Activated CD8-positive, alpha-beta memory T cell treated with anti-CD3 and anti-CD28 coated beads, Interleukin-2, amount 10 ng/mL, durations not matched to agents 7 days and 5 days (primary cell): ENCODE measurements at regions of chr15 and their contacts with region 1.

Region 1: GRCh38 chr15:99704444-99704838 is 28.8 kb downstream of the LYSMD4 start:
- DNase-seq: no peak
- ATAC-seq: peak; percentile 72
- H3K4me3 Mint-ChIP-seq: no peak overlapping the region
- H3K27ac Mint-ChIP-seq: no peak overlapping the region
- H3K4me1 Mint-ChIP-seq: peaks cover 38% of the 10 kb centered on the region
- H3K27me3 Mint-ChIP-seq: no peaks in the 10 kb centered on the region

Region 2: DNA sequence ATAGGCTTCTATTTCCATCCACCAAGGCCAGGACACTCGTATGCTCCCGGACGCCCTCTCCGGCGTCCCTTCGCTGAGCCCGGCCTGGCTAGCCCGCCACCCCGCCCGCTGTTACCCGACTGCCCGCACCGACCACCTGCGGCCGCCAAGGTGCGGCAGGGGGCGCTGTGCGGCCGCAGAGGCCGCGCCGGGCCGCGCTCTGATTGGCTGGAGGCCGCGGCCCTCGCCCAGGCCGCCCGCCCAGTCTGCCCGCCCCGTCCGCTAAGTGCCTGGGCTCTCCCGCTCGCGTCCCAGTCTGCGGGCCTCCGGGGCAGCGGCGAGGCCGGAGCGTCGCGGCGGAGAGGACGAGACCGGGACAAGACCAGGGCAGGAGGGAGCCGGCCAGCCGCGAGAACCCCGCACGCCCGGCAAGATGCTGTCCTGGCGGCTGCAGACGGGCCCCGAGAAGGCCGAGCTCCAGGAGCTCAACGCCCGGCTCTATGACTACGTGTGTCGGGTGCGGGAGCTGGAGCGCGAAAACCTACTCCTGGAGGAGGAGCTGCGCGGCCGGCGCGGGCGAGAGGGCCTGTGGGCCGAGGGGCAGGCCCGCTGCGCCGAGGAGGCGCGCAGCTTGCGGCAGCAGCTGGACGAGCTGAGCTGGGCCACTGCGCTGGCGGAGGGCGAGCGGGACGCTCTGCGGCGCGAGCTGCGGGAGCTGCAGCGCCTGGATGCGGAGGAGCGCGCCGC is 599.5 kb before region 1 on chr15 and contains the start of gene SYNM:
- CTCF ChIA-PET with region 1: interaction called, 11 read pairs
- DNase-seq: peak; percentile 46
- ATAC-seq: peak; percentile 52
- H3K4me3 Mint-ChIP-seq: peak within 1 kb of the TSS; percentile 60
- H3K27ac Mint-ChIP-seq: peak within 1 kb of the TSS; percentile 15
- H3K4me1 Mint-ChIP-seq: peaks cover 38% of the 10 kb centered on the region
- H3K27me3 Mint-ChIP-seq: peaks cover 58% of the 10 kb centered on the region
- total RNA-seq, gene SYNM: 1.5 TPM

Region 3: GRCh38 chr15:99282121-99282520 is 422.3 kb before region 1 on chr15:
- CTCF ChIA-PET with region 1: interaction called, 74 read pairs
- DNase-seq: no peak
- ATAC-seq: no peak
- H3K4me3 Mint-ChIP-seq: no peak overlapping the region
- H3K27ac Mint-ChIP-seq: no peak overlapping the region
- H3K4me1 Mint-ChIP-seq: peaks cover 32% of the 10 kb centered on the region
- H3K27me3 Mint-ChIP-seq: no peaks in the 10 kb centered on the region

Region 4: GRCh38 chr15:99566157-99566897 is 138.1 kb before region 1 on chr15:
- CTCF ChIA-PET with region 1: interaction called, 12 read pairs
- DNase-seq: peak; percentile 48
- ATAC-seq: peak; percentile 20
- H3K4me3 Mint-ChIP-seq: peak overlapping the region; percentile 96
- H3K27ac Mint-ChIP-seq: peak overlapping the region; percentile 84
- H3K4me1 Mint-ChIP-seq: peaks cover 20% of the 10 kb centered on the region
- H3K27me3 Mint-ChIP-seq: peaks cover 5% of the 10 kb centered on the region

Region 5: DNA sequence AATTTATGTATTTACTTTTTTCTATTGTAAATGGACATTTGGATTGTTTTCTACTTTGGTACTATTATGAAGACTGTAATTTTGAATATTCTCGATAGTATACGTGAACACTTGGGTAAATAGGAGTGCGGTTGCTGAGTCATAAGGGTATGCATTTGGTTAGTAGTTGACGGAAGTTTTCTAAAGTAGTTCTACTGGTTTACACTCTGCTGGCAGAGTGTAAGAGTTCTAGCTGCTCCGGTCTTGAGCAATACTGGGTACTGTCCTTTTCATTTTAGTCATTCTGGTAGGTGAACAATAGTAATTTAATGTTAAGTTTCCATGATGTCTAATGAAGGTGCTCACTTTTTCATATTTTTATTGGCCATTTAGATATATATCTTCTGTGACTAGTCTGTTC is 68.6 kb before region 1 on chr15:
- CTCF ChIA-PET with region 1: no interaction called
- DNase-seq: no peak
- ATAC-seq: peak; percentile 80
- H3K4me3 Mint-ChIP-seq: no peak overlapping the region
- H3K27ac Mint-ChIP-seq: no peak overlapping the region
- H3K4me1 Mint-ChIP-seq: peaks cover 17% of the 10 kb centered on the region
- H3K27me3 Mint-ChIP-seq: no peaks in the 10 kb centered on the region

Region 6: DNA sequence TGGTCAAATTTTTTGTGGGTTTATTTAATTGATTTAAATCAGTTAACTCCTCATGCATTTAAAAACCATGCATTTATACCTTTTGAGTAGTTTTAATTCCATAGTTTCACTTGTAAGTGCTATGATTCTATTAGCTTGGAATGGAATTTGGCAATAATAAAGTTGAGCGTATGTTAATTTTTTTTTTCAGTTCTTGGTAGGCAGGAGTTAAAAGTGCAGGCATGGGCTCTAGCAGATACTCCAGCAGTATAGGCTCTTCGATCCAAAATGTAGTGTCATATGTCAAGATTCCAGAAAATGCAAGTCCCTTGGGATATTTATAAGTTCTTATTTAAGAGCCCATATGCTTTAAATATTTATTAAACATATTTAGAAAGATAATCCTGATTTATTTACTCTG is 41.5 kb before region 1 on chr15:
- CTCF ChIA-PET with region 1: no interaction called
- DNase-seq: no peak
- ATAC-seq: no peak
- H3K4me3 Mint-ChIP-seq: no peak overlapping the region
- H3K27ac Mint-ChIP-seq: no peak overlapping the region
- H3K4me1 Mint-ChIP-seq: peaks cover under 1% of the 10 kb centered on the region
- H3K27me3 Mint-ChIP-seq: no peaks in the 10 kb centered on the region

Region 7: GRCh38 chr15:99733268-99734039 is 29.0 kb after region 1 on chr15 and contains the start of gene LYSMD4:
- CTCF ChIA-PET with region 1: interaction called, 26 read pairs
- DNase-seq: peak; percentile 99
- ATAC-seq: peak; percentile 100
- H3K4me3 Mint-ChIP-seq: peak within 1 kb of the TSS; percentile 75
- H3K27ac Mint-ChIP-seq: peak within 1 kb of the TSS; percentile 85
- H3K4me1 Mint-ChIP-seq: peaks cover 26% of the 10 kb centered on the region
- H3K27me3 Mint-ChIP-seq: no peaks in the 10 kb centered on the region
- total RNA-seq, gene LYSMD4: 8.3 to 8.5 TPM